IMR-90 (cell line): ENCODE measurements at regions of chr1 and their contacts with region 1.

Region 1: DNA sequence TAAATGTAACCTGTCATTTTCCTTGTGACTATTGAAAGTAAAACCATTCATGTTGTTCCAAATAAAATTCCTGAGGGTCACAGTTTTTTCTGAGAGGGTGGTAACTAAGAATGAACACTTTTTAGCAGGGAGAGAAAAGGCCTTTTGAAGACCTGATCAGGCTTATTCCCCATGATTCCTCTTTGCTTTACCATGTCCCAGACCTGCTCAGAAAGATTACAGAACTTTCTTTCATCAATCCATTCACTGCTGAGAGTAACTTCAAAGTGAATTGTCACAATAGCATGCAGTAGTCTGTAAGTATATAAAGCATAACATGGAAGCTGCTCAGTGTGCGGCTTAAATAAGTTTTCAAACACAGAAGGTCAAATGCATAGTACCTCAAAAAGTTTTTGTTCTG is 201.5 kb upstream of the COL11A1 start:
- DNase-seq: no peak
- ATAC-seq: no peak
- H3K4me3 ChIP-seq: no peak overlapping the region
- H3K27ac ChIP-seq: no peak overlapping the region
- H3K4me1 ChIP-seq: no peaks in the 10 kb centered on the region
- H3K27me3 ChIP-seq: no peaks in the 10 kb centered on the region
- CTCF ChIP-seq: no peak
- POLR2A ChIP-seq: no peak
- RAD21 ChIP-seq: no peak

Region 2: GRCh38 chr1:103197216-103197615 is 112.6 kb before region 1 on chr1:
- CTCF ChIA-PET with region 1: no interaction called
- POLR2A ChIA-PET with region 1: no interaction called
- dilution Hi-C with region 1: no loop called
- in situ Hi-C with region 1: no loop called
- intact Hi-C with region 1: no loop called
- DNase-seq: peak; percentile 49
- ATAC-seq: no peak; the same call in 1 of the 2 replicates
- H3K4me3 ChIP-seq: no peak overlapping the region
- H3K27ac ChIP-seq: no peak overlapping the region
- H3K4me1 ChIP-seq: no peaks in the 10 kb centered on the region
- H3K27me3 ChIP-seq: no peaks in the 10 kb centered on the region
- CTCF ChIP-seq: no peak
- POLR2A ChIP-seq: no peak
- RAD21 ChIP-seq: no peak

Region 3: DNA sequence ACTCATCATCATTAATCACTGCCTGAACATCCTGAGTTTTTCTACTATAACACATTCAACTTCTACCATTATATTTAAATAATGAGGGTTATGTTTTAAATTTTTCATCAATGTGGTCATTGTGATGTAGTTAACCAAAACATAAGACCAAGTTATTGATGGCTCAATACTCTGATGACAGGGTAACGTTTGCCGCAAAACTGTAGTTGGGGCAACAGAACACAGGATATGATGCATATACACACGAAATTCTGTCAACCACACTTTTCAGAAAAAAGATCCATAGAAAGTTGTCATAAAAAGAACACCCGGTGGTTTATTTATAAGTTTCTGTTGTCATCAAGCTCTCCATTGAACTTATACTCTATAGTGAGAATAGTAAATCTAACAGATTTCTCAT is 79.7 kb before region 1 on chr1:
- CTCF ChIA-PET with region 1: no interaction called
- POLR2A ChIA-PET with region 1: no interaction called
- dilution Hi-C with region 1: no loop called
- in situ Hi-C with region 1: no loop called
- intact Hi-C with region 1: loop called (anchors 5 kb)
- DNase-seq: peak; percentile 51
- ATAC-seq: no peak
- H3K4me3 ChIP-seq: no peak overlapping the region
- H3K27ac ChIP-seq: no peak overlapping the region
- H3K4me1 ChIP-seq: no peaks in the 10 kb centered on the region
- H3K27me3 ChIP-seq: no peaks in the 10 kb centered on the region
- CTCF ChIP-seq: no peak
- POLR2A ChIP-seq: no peak
- RAD21 ChIP-seq: no peak

Region 4: DNA sequence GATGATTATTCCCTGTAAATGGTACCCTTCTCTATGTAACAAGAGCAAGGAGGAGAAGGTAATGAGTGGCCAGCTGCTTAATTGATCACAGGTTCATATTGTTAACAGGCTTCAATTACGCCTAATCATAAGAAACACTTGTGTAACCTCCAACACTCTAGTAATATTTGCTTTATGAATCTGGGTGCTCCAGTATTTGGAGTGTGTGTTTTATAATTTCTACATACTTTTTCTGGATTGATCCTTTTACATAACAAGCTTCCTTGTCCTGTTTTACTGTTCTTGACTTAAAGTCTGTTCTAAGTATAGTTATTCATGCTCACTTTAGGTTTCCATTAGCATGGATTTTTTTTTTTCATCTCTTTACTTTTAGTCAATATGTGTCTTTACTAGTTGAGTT is 1424.1 kb after region 1 on chr1:
- CTCF ChIA-PET with region 1: no interaction called
- POLR2A ChIA-PET with region 1: no interaction called
- dilution Hi-C with region 1: no loop called
- in situ Hi-C with region 1: no loop called
- intact Hi-C with region 1: no loop called
- DNase-seq: no peak
- ATAC-seq: no peak
- H3K4me3 ChIP-seq: no peak overlapping the region
- H3K27ac ChIP-seq: no peak overlapping the region
- H3K4me1 ChIP-seq: no peaks in the 10 kb centered on the region
- H3K27me3 ChIP-seq: no peaks in the 10 kb centered on the region
- CTCF ChIP-seq: no peak
- POLR2A ChIP-seq: no peak
- RAD21 ChIP-seq: no peak